Calu3 (cell line): ENCODE measurements at regions of chr10 and their contacts with region 1.

Region 1: DNA sequence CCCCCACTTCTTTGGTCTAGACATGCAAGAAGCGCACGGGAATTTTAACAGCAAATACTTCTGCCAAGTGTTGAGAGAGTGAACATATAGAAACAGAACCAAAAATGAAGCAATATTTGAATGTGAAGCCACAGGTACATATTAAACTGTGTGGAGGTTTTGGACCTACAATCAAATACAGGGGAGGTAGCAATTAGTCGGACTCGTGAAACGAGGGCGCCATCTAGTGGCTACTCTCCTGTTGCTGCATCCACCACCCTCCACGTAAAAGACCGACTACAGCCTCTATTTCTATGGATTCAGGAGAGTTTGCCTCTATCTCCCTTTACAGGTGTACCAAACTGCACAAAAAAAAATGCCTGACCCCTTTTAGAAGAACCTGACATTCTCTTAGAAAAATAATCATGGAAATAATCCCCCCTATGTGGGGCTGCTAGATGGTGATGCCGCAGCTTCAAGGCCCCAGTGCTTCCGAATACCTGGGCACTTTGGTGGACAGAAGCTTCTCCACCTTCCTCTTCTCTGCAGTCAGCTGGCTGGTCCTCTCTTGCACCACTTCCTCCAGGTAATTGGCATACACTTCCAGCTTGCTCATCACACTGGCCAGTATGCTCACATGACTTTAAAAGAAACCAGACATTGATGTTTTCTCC is 31.7 kb downstream of the TECTB start:
- DNase-seq: peak; percentile 72
- H3K4me3 Mint-ChIP-seq: no peak overlapping the region
- H3K27ac Mint-ChIP-seq: no peak overlapping the region
- H3K4me1 Mint-ChIP-seq: no peaks in the 10 kb centered on the region
- H3K27me3 Mint-ChIP-seq: peaks cover 7% of the 10 kb centered on the region
- CTCF ChIP-seq: peak; percentile 67

Region 2: GRCh38 chr10:111756217-111757061 is 558.5 kb before region 1 on chr10:
- CTCF ChIA-PET with region 1: no interaction called
- intact Hi-C with region 1: loop called (anchors 5 kb)
- DNase-seq: peak; percentile 50
- H3K4me3 Mint-ChIP-seq: no peak overlapping the region
- H3K27ac Mint-ChIP-seq: no peak overlapping the region
- H3K4me1 Mint-ChIP-seq: no peaks in the 10 kb centered on the region
- H3K27me3 Mint-ChIP-seq: peaks cover 13% of the 10 kb centered on the region
- CTCF ChIP-seq: no peak

Region 3: GRCh38 chr10:112115799-112116385 is 199.1 kb before region 1 on chr10:
- CTCF ChIA-PET with region 1: no interaction called
- intact Hi-C with region 1: loop called (anchors 10 kb)
- DNase-seq: peak; percentile 54
- H3K4me3 Mint-ChIP-seq: no peak overlapping the region
- H3K27ac Mint-ChIP-seq: no peak overlapping the region
- H3K4me1 Mint-ChIP-seq: no peaks in the 10 kb centered on the region
- H3K27me3 Mint-ChIP-seq: peaks cover 60% of the 10 kb centered on the region
- CTCF ChIP-seq: peak; percentile 68

Region 4: DNA sequence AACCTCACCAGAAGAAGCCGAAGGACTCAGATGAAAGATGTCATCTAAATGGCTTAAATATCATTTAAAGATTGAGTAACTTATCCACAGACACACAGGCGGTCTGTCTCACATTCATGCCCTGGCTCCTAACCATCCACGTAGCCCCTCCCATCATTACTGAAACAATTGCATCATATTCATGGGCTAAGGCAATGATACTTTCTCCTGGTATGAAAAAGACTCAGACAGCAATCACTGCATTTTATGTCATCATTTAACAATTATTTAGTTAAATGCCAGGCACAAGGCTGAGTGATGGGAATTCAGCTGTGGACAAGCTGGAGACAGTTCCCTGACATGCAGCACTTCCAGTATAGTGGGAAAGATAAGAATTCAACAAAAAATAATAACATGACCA is 43.0 kb before region 1 on chr10:
- CTCF ChIA-PET with region 1: no interaction called
- intact Hi-C with region 1: no loop called
- DNase-seq: no peak
- H3K4me3 Mint-ChIP-seq: no peak overlapping the region
- H3K27ac Mint-ChIP-seq: no peak overlapping the region
- H3K4me1 Mint-ChIP-seq: no peaks in the 10 kb centered on the region
- H3K27me3 Mint-ChIP-seq: no peaks in the 10 kb centered on the region
- CTCF ChIP-seq: no peak

Region 5: GRCh38 chr10:112361951-112362751 is 47.2 kb after region 1 on chr10:
- CTCF ChIA-PET with region 1: no interaction called
- intact Hi-C with region 1: no loop called
- DNase-seq: no peak
- H3K4me3 Mint-ChIP-seq: no peak overlapping the region
- H3K27ac Mint-ChIP-seq: no peak overlapping the region
- H3K4me1 Mint-ChIP-seq: no peaks in the 10 kb centered on the region
- H3K27me3 Mint-ChIP-seq: no peaks in the 10 kb centered on the region
- CTCF ChIP-seq: no peak

Region 6: GRCh38 chr10:112434988-112435619 is 120.2 kb after region 1 on chr10:
- CTCF ChIA-PET with region 1: interaction called, 3 read pairs
- intact Hi-C with region 1: loop called (anchors 5 kb)
- DNase-seq: no peak
- H3K4me3 Mint-ChIP-seq: no peak overlapping the region
- H3K27ac Mint-ChIP-seq: no peak overlapping the region
- H3K4me1 Mint-ChIP-seq: no peaks in the 10 kb centered on the region
- H3K27me3 Mint-ChIP-seq: no peaks in the 10 kb centered on the region
- CTCF ChIP-seq: peak; percentile 35

Region 7: DNA sequence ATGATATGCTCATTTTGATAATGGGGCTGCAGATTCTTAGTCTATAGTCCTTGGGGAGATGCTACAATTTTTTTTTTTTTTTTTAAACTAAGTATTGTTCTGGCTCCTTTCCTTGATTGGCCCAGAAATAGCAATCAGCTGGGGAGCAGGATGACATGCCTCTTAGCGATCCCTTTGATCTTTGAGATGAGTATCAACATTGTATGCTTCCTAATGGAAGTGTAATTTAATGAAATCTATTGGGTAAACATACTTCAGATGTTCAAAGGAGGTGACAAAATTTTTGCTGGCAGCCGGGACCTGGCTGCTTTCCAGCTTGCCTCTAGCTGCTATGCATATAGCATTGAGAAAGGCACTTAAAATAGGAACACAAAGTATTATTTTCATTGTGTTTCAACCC is 175.6 kb after region 1 on chr10:
- CTCF ChIA-PET with region 1: no interaction called
- intact Hi-C with region 1: no loop called
- DNase-seq: peak; percentile 4
- H3K4me3 Mint-ChIP-seq: no peak overlapping the region
- H3K27ac Mint-ChIP-seq: no peak overlapping the region
- H3K4me1 Mint-ChIP-seq: peaks cover 8% of the 10 kb centered on the region
- H3K27me3 Mint-ChIP-seq: no peaks in the 10 kb centered on the region
- CTCF ChIP-seq: no peak